PC-9 (cell line): ENCODE measurements at regions of chr6 and their contacts with region 1.

Region 1: GRCh38 chr6:158072083-158072721 is 90.5 kb downstream of the SYNJ2 start:
- DNase-seq: peak in 1 of 2 experiments; percentile 46
- H3K4me3 ChIP-seq: no peak overlapping the region
- H3K27ac ChIP-seq: no peak overlapping the region
- H3K4me1 ChIP-seq: peaks cover 36% of the 10 kb centered on the region
- H3K27me3 ChIP-seq: no peaks in the 10 kb centered on the region
- CTCF ChIP-seq: peak; percentile 88

Region 2: GRCh38 chr6:157632821-157633220 is 439.4 kb before region 1 on chr6:
- CTCF ChIA-PET with region 1: no interaction called
- POLR2A ChIA-PET with region 1: no interaction called
- intact Hi-C with region 1: no loop called
- DNase-seq: no peak
- H3K4me3 ChIP-seq: no peak overlapping the region
- H3K27ac ChIP-seq: no peak overlapping the region
- H3K4me1 ChIP-seq: no peaks in the 10 kb centered on the region
- H3K27me3 ChIP-seq: no peaks in the 10 kb centered on the region
- CTCF ChIP-seq: no peak

Region 3: DNA sequence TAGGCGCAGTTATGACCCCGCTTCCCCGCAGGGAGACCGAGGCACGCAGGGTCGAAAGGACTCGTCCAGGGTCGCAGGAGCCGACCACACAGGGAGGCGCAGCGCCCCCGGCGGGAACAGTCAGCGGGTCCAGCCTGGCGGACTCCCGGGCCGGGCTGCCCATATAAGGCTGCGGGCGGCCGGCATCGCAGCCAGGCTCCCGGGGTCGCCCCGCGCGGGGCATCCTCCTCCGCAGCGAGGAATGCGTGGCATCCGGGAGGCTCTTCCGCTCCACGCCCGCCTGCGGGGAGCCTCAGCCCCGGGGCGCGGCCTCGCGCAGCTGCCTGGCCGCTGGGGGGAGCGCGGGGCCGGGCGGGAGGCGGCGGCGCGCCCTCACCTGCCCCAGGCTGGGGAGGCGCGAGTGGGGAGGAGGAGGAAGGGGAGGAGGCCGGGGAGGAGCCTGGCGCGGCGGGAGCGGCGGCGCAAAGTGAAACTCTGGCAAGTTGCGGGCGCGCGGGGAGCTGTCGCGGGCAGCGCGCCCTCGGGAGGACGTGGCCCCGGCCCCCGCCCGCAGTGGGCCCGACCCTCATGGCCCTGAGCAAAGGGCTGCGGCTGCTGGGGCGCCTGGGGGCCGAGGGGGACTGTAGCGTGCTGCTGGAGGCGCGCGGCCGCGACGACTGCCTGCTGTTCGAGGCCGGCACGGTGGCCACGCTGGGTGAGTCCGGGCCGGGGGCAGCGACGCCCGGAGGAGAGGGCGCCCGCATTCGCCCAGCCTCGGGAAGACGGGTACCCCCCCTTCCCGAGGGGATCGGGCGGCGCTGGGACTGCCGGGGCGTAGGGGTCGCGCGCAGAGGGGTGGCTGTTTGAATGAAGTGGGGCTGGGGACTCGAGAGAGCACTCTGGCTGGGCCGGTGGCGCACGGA is 90.6 kb before region 1 on chr6 and contains the start of gene SYNJ2:
- CTCF ChIA-PET with region 1: no interaction called
- POLR2A ChIA-PET with region 1: no interaction called
- intact Hi-C with region 1: loop called (anchors 1 kb)
- DNase-seq: peak; percentile 46 to 79
- H3K4me3 ChIP-seq: peak within 1 kb of the TSS; percentile 86
- H3K27ac ChIP-seq: 0 out of 2 replicates have a peak within 1 kb of the TSS, but pooled peaks have one; percentile 21
- H3K4me1 ChIP-seq: peaks cover 46% of the 10 kb centered on the region
- H3K27me3 ChIP-seq: no peaks in the 10 kb centered on the region
- CTCF ChIP-seq: peak; percentile 48; the same call in 1 of the 2 replicates
- total RNA-seq, gene SYNJ2: 30.3 and 39.4 TPM in 2 replicates

Region 4: GRCh38 chr6:158031381-158032353 is 40.5 kb before region 1 on chr6:
- CTCF ChIA-PET with region 1: no interaction called
- POLR2A ChIA-PET with region 1: no interaction called
- intact Hi-C with region 1: loop called (anchors 5 kb)
- DNase-seq: peak; percentile 80 to 81
- H3K4me3 ChIP-seq: no peak overlapping the region
- H3K27ac ChIP-seq: peak overlapping the region; percentile 64
- H3K4me1 ChIP-seq: peaks cover 29% of the 10 kb centered on the region
- H3K27me3 ChIP-seq: no peaks in the 10 kb centered on the region
- CTCF ChIP-seq: no peak

Region 5: GRCh38 chr6:158040051-158040803 is 32.0 kb before region 1 on chr6:
- CTCF ChIA-PET with region 1: no interaction called
- POLR2A ChIA-PET with region 1: interaction called, 6 read pairs
- intact Hi-C with region 1: loop called (anchors 1 kb)
- DNase-seq: peak; percentile 60 to 97
- H3K4me3 ChIP-seq: peak overlapping the region; percentile 43; the same call in 1 of the 2 replicates
- H3K27ac ChIP-seq: peak overlapping the region; percentile 90
- H3K4me1 ChIP-seq: peaks cover 59% of the 10 kb centered on the region
- H3K27me3 ChIP-seq: no peaks in the 10 kb centered on the region
- CTCF ChIP-seq: no peak

Region 6: GRCh38 chr6:158205169-158205944 is 133.2 kb after region 1 on chr6:
- CTCF ChIA-PET with region 1: no interaction called
- POLR2A ChIA-PET with region 1: no interaction called
- intact Hi-C with region 1: no loop called
- DNase-seq: no peak
- H3K4me3 ChIP-seq: no peak overlapping the region
- H3K27ac ChIP-seq: no peak overlapping the region
- H3K4me1 ChIP-seq: no peaks in the 10 kb centered on the region
- H3K27me3 ChIP-seq: no peaks in the 10 kb centered on the region
- CTCF ChIP-seq: peak; percentile 33